ENCODE measurements at regions of chr19 and their contacts with region 1.

Region 1: DNA sequence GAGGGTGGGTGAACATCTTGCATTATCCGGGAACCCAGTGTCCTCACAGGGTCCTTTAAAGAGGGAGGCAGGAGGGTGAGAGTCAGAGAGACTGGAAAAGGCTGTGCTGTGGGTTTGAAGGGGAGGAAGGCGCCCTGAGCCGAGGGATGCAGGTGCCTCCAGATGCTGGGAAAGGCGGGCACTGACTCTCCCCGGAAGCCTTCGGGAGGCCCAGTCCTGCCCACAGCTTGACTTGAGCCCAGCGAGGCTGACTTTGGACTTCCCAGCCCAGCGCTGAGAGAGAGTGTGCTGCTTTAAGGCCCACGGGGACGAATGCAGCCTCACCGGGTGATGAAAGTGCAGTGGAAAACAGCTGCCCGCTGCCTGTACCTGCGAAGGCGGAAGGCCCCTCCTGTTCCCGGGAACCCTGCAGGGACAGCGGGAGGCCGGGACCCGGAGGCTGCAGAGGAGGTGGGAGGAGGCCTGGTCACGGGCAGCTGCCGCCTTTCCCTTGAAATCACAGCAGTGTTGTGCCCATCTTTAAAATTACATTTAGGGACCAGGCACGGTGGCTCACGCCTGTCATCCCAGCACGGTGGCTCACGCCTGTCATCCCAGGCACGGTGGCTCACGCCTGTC is 16.1 kb downstream of the REXO1 start:
- DNase-seq: no peak
- H3K4me3 ChIP-seq: no peak overlapping the region
- H3K4me3 Mint-ChIP-seq: no peak overlapping the region
- H3K27ac ChIP-seq: no peak overlapping the region
- H3K27ac Mint-ChIP-seq: peak overlapping the region in 2 of 8 donors; percentile 22 to 66
- H3K4me1 ChIP-seq: no peaks in the 10 kb centered on the region
- H3K4me1 Mint-ChIP-seq: peaks cover 0 to 26% (median 7%) of the 10 kb centered on the region in 3 donors
- H3K27me3 ChIP-seq: no peaks in the 10 kb centered on the region
- H3K27me3 Mint-ChIP-seq: peaks cover 0 to 2% of the 10 kb centered on the region in 2 donors

Region 2: DNA sequence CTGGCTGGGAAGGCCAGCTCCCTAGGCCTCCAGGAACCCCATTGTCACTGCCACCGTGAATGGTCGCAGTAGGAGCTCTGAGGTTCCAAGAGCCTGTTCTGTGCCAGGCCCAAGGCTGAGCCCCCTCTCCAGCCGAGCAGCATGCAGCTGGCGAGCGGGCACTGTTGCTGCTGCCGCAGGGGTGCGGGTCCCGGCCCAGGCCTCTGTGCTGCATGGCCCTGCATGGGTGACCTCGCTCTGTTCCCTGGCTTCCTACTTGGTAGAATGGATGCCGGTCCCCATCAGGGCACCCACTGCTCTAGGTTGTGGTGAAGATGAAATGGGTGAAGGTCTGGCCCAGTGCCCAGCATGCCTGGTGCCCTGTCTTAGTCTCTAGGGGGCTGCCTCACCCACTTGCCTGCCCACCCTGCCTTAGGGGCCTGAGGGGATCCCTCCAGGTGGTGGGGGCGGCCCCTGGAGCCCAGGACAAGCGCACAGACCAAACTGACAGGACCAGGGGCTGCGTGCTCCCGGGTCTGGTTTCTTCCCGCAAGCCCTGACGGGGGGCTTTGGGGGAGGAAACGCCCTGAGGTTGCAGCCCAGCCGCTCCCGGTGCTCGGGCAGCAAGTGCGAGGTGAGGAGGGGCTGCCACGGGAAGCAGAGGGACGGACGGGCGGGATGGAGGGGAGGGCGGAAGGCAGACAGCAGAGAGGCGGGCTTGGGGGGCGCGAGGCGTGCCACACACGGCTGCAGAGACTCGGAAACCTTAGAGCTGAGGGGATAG is 218.2 kb before region 1 on chr19:
- CTCF ChIA-PET with region 1: no interaction called
- POLR2A ChIA-PET with region 1: interaction called, 10 read pairs
- DNase-seq: no peak
- H3K4me3 ChIP-seq: no peak overlapping the region
- H3K4me3 Mint-ChIP-seq: no peak overlapping the region
- H3K27ac ChIP-seq: no peak overlapping the region
- H3K27ac Mint-ChIP-seq: peak overlapping the region in 2 of 8 donors; percentile 26 to 29
- H3K4me1 ChIP-seq: peaks cover 16% of the 10 kb centered on the region
- H3K4me1 Mint-ChIP-seq: peaks cover 16 to 41% (median 26%) of the 10 kb centered on the region in 3 donors
- H3K27me3 ChIP-seq: no peaks in the 10 kb centered on the region
- H3K27me3 Mint-ChIP-seq: no peaks in the 10 kb centered on the region

Region 3: DNA sequence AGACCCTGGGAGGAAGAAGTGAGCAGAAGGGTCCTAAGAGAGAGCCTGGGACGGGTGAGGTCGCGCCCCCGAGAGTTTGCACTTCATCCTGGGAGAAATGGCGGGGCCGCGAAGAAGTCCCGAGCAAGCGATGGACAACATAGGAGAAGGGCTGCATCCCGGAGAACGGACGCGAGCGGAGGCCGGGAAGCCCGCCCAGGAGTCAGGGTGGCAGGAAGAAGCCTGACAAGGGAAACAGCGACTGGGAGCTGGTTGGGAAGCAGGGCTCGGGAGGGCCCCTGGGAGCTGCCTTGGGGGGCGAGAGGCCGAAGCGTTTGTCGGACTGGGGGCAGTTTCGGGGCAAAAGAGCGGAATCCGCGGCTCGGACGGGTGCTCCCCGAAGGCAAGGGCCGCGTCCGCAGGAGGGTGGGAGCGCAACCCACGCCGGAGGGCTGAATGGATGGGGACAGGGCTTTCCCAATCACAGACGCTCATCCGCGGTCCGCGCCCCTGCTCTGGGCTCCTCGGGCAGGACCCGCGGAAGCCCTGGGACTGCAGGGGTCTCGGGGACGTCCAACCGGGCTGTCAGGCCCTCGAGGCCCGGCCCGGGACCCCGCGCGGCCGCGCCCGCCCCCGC is 52.7 kb after region 1 on chr19:
- CTCF ChIA-PET with region 1: no interaction called
- POLR2A ChIA-PET with region 1: no interaction called
- DNase-seq: no peak
- H3K4me3 ChIP-seq: peak overlapping the region; percentile 70
- H3K4me3 Mint-ChIP-seq: peak overlapping the region; percentile 94 to 100 (median 99)
- H3K27ac ChIP-seq: peak overlapping the region; percentile 96
- H3K27ac Mint-ChIP-seq: peak overlapping the region; percentile 96 to 100 (median 100)
- H3K4me1 ChIP-seq: peaks cover 34% of the 10 kb centered on the region
- H3K4me1 Mint-ChIP-seq: peaks cover 26 to 44% (median 28%) of the 10 kb centered on the region in 3 donors
- H3K27me3 ChIP-seq: no peaks in the 10 kb centered on the region
- H3K27me3 Mint-ChIP-seq: peaks cover 0 to 10% of the 10 kb centered on the region in 2 donors

Measured in CD8-positive, alpha-beta memory T cell (primary cell).